ENCODE measurements at regions of chr3 and their contacts with region 1.

Region 1: DNA sequence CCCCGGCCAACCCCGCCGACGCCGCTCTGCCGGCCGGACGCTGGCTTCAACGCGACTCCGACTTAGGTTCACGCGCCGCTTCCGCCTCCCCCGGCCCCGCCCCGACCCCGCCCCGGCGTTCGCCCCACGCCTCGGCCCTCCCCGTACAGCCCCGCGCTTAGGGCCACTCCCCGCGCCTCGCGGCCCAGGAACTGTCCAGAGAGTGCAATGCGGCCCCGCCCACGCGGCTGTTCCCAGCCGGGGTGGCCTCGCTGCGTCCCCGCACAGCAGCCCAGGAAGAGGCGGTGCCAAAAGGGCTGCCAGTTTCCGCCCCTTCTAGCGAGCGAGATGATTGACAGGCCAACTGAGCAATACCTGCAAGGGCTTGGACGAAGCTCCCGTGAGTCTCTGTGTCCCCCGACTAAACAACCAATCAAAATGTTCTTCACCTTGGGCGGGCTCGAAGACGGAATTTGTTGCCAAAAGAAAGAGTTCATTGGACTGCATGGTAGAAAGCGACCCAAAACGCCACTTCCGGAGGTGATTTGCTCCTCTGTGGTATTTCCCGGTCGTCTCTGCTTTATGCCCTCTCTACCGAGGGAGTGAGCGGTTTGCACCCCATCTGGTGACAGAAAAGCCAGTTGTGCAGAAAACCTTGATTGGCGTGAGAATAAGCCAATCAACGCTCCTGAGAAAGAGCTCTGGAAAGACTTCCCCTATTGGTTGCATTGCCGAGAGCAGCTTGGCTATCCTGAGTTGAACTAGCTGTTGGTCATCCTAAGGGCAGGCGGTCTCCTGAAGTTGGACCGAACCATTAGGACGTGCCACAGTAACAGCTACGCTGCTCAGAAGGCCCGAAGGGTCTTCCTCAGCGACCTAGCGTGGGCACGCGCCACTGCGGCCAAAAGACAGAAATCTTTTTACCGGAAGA is at the start of gene UBP1:
- DNase-seq: peak; percentile 99
- H3K4me3 ChIP-seq: peak within 1 kb of the TSS; percentile 100
- H3K4me3 Mint-ChIP-seq: peak within 1 kb of the TSS; percentile 98
- H3K27ac Mint-ChIP-seq: peak within 1 kb of the TSS; percentile 99
- H3K4me1 ChIP-seq: peaks cover 30% of the 10 kb centered on the region
- H3K4me1 Mint-ChIP-seq: peaks cover 23% of the 10 kb centered on the region
- H3K27me3 ChIP-seq: no peaks in the 10 kb centered on the region
- H3K27me3 Mint-ChIP-seq: no peaks in the 10 kb centered on the region
- CTCF ChIP-seq: no peak
- total RNA-seq, gene UBP1: 87.7 and 90.8 TPM in 2 replicates

Region 2: GRCh38 chr3:33218446-33219174 is 222.0 kb before region 1 on chr3 and contains the start of gene SUSD5:
- CTCF ChIA-PET with region 1: no interaction called
- POLR2A ChIA-PET with region 1: no interaction called
- intact Hi-C with region 1: no loop called
- DNase-seq: no peak
- H3K4me3 ChIP-seq: no peak within 1 kb of the TSS
- H3K4me3 Mint-ChIP-seq: no peak within 1 kb of the TSS
- H3K27ac Mint-ChIP-seq: no peak within 1 kb of the TSS
- H3K4me1 ChIP-seq: no peaks in the 10 kb centered on the region
- H3K4me1 Mint-ChIP-seq: no peaks in the 10 kb centered on the region
- H3K27me3 ChIP-seq: no peaks in the 10 kb centered on the region
- H3K27me3 Mint-ChIP-seq: no peaks in the 10 kb centered on the region
- CTCF ChIP-seq: no peak
- total RNA-seq, gene SUSD5: not detected in 2 replicates

Region 3: DNA sequence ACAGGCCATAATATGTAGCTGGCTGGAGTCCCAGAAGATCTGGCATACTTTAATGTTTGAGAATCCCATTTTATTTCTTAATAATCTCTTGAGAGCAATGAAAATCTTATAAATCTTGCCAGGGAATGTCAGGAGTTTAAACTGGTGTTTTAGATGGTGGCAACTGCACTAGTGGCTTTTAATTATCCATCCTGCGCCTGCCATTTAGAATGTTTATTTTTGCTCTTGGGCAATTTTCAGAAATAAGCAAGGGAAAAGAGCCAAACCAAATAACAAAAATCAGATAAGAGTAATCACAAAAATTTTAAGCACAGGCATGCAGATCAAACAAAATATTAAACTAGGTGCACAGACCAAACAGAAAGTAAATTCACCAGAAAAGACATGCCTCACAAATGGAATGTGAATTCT is 41.5 kb after region 1 on chr3:
- CTCF ChIA-PET with region 1: no interaction called
- POLR2A ChIA-PET with region 1: no interaction called
- intact Hi-C with region 1: loop called (anchors 5 kb)
- DNase-seq: no peak
- H3K4me3 ChIP-seq: no peak overlapping the region
- H3K4me3 Mint-ChIP-seq: no peak overlapping the region
- H3K27ac Mint-ChIP-seq: no peak overlapping the region
- H3K4me1 ChIP-seq: no peaks in the 10 kb centered on the region
- H3K4me1 Mint-ChIP-seq: no peaks in the 10 kb centered on the region
- H3K27me3 ChIP-seq: no peaks in the 10 kb centered on the region
- H3K27me3 Mint-ChIP-seq: no peaks in the 10 kb centered on the region
- CTCF ChIP-seq: no peak

Region 4: DNA sequence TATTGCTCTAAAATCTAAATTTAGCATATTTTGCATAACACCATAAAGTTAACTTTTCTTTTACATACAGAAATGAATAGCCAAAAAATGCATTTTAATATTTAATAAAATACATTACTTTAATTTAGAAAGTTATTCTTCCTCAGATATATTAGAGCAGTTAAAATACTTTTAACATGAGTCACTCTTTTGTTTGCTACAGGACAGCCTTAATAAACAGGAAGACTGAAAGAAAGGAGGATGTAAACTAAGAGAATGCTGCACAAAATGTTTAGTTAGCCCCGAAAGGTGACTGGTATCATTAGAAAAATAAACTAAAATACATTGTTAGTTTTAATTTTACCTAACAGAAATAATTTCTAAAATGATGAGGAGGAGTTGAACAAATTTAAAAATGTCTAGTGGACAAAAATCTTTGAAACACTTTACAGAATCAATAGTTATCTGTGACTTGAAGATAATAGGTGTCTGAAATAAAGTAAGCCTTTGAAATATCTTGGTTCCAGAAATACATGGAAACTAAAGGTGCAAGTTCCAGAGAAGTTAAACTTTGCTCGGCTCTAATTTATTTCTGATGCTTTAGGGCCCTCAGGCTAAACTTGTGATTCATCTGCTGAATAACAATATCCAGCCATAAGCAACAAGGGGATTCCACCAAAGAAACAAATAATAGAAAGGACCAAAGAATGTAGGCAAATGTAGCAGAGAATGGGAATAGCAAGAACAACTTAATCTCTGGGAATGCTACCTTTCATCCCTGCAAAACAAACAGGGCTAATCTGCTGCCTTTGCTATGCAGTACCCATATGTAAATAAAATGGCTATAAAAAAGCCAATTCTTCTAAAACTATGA is 138.0 kb after region 1 on chr3:
- CTCF ChIA-PET with region 1: interaction called, 3 read pairs
- POLR2A ChIA-PET with region 1: interaction called, 5 read pairs
- intact Hi-C with region 1: loop called (anchors 2 kb)
- DNase-seq: peak; percentile 45 to 63
- H3K4me3 ChIP-seq: no peak overlapping the region
- H3K4me3 Mint-ChIP-seq: no peak overlapping the region
- H3K27ac Mint-ChIP-seq: peak overlapping the region; percentile 45
- H3K4me1 ChIP-seq: peaks cover 63% of the 10 kb centered on the region
- H3K4me1 Mint-ChIP-seq: peaks cover 15% of the 10 kb centered on the region
- H3K27me3 ChIP-seq: no peaks in the 10 kb centered on the region
- H3K27me3 Mint-ChIP-seq: no peaks in the 10 kb centered on the region
- CTCF ChIP-seq: no peak

Region 5: DNA sequence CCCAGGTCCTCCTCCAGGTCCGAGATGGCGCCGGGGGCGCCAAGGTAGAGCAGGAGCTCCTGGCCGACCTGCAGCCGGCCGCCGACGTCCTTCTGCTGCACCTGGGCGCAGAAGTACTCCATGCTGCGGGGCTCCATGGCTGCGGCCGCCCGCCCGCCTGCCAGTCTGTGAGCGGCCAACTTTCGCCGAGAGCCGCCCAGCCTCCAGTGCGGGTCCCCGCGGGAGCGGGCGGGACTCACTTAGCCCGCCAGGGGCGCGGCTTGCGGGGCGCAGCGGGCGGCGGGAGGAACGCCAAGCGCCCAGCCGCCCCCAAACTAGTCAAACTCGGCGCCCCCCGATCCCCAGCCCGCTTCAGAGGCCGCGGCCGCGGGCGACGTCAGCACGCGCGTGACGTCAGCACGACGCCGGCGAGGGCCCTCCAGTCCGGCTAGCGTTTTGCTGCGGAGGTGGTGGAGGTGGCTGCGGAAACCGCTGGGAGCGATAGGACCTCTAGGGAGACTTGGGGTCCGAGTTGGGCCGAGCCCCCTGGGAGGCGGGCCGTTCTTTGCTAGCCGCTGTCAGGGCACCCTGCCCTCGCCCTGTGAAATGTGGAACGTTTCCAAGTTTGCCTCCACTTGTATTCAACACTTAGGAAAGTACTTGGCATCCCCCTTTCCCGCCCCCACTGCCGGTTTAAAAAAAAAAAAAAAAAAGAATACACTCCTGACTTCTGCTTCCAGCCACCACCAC is 277.5 kb after region 1 on chr3 and contains the start of gene CLASP2:
- CTCF ChIA-PET with region 1: no interaction called
- POLR2A ChIA-PET with region 1: interaction called, 4 read pairs
- intact Hi-C with region 1: loop called (anchors 5 kb)
- DNase-seq: peak; percentile 89
- H3K4me3 ChIP-seq: peak within 1 kb of the TSS; percentile 90
- H3K4me3 Mint-ChIP-seq: no peak within 1 kb of the TSS
- H3K27ac Mint-ChIP-seq: no peak within 1 kb of the TSS
- H3K4me1 ChIP-seq: peaks cover 11% of the 10 kb centered on the region; the same call in 1 of the 2 replicates
- H3K4me1 Mint-ChIP-seq: no peaks in the 10 kb centered on the region
- H3K27me3 ChIP-seq: no peaks in the 10 kb centered on the region
- H3K27me3 Mint-ChIP-seq: no peaks in the 10 kb centered on the region
- CTCF ChIP-seq: no peak
- total RNA-seq, gene CLASP2: 65.6 and 66.3 TPM in 2 replicates

Region 6: GRCh38 chr3:33798411-33799201 is 358.0 kb after region 1 on chr3 and contains the start of gene PDCD6IP:
- CTCF ChIA-PET with region 1: no interaction called
- POLR2A ChIA-PET with region 1: interaction called, 17 read pairs
- intact Hi-C with region 1: no loop called
- DNase-seq: peak; percentile 95 to 96
- H3K4me3 ChIP-seq: peak within 1 kb of the TSS; percentile 75
- H3K4me3 Mint-ChIP-seq: peak within 1 kb of the TSS; percentile 91
- H3K27ac Mint-ChIP-seq: peak within 1 kb of the TSS; percentile 91
- H3K4me1 ChIP-seq: peaks cover 10% of the 10 kb centered on the region; the same call in 1 of the 2 replicates
- H3K4me1 Mint-ChIP-seq: peaks cover 16% of the 10 kb centered on the region
- H3K27me3 ChIP-seq: no peaks in the 10 kb centered on the region
- H3K27me3 Mint-ChIP-seq: no peaks in the 10 kb centered on the region
- CTCF ChIP-seq: no peak
- total RNA-seq, gene PDCD6IP: 183 and 185 TPM in 2 replicates

Measured in Caco-2 (cell line).